ENCODE measurements at regions of chr7 and their contacts with region 1.

Region 1: GRCh38 chr7:28921822-28922221 is 36.3 kb downstream of the TRIL start:
- DNase-seq: peak; percentile 68
- ATAC-seq: peak; percentile 96
- H3K4me3 ChIP-seq: no peak overlapping the region
- H3K27ac ChIP-seq: no peak overlapping the region
- H3K4me1 ChIP-seq: peaks cover 1% of the 10 kb centered on the region; the same call in 1 of the 2 replicates
- H3K27me3 ChIP-seq: peaks cover 12% of the 10 kb centered on the region
- CTCF ChIP-seq: peak; percentile 82
- POLR2A ChIP-seq: no peak
- RAD21 ChIP-seq: peak; percentile 63

Region 2: DNA sequence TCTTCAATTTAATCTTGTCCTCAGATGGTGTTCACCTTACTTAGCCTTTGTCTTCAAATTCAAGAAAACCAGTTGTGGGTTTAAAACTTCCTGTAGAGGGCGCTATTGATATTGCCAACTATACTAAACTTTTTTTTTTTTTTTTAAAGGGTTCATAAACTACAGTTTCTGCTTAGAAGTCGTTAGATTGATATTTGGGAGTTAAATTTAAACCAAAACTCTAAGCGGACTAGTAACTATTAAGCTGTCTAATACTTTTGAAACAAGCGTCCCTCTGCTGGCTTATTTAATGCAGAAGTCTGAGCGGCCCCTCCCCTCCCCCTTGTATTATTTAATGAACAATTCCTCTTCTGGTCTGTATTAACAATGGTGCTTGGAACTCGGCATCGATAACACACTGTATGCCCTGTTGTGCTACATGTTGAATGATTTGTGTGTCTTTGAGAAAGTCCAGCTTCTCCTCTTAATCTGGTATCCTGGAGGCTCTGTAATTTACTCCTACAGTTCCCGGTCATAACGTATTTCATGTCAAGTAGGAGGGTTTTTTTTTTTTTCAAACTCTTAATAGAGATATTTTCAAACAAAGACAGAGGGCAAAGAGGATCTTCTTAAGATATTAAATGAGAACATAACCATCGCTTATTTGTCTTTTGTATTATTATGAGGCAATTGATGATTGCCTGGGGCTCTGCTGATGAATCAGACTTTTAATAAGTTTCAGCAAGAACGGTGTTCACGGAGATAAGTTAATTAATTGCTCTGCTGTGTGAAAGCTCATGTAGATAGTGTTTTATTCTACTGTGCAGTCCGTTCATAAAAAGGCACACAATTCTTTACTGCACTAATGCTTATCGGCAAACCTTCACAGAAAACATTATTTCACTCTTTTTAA is 532.1 kb before region 1 on chr7:
- CTCF ChIA-PET with region 1: no interaction called
- POLR2A ChIA-PET with region 1: no interaction called
- dilution Hi-C with region 1: no loop called
- in situ Hi-C with region 1: no loop called
- intact Hi-C with region 1: loop called (anchors 2 kb)
- DNase-seq: peak; percentile 79
- ATAC-seq: peak; percentile 75
- H3K4me3 ChIP-seq: peak overlapping the region; percentile 34; the same call in 1 of the 2 replicates
- H3K27ac ChIP-seq: no peak overlapping the region
- H3K4me1 ChIP-seq: 0 out of 2 replicates have a peak, but pooled peaks cover 2% of the 10 kb centered on the region
- H3K27me3 ChIP-seq: peaks cover 7% of the 10 kb centered on the region; the same call in 1 of the 2 replicates
- CTCF ChIP-seq: peak; percentile 80
- POLR2A ChIP-seq: no peak
- RAD21 ChIP-seq: peak; percentile 80

Region 3: GRCh38 chr7:28732071-28732869 is 189.6 kb before region 1 on chr7:
- CTCF ChIA-PET with region 1: no interaction called
- POLR2A ChIA-PET with region 1: no interaction called
- dilution Hi-C with region 1: no loop called
- in situ Hi-C with region 1: no loop called
- intact Hi-C with region 1: no loop called
- DNase-seq: peak; percentile 55
- ATAC-seq: peak; percentile 40
- H3K4me3 ChIP-seq: no peak overlapping the region
- H3K27ac ChIP-seq: no peak overlapping the region
- H3K4me1 ChIP-seq: peaks cover 6% of the 10 kb centered on the region
- H3K27me3 ChIP-seq: no peaks in the 10 kb centered on the region
- CTCF ChIP-seq: no peak
- POLR2A ChIP-seq: no peak
- RAD21 ChIP-seq: no peak

Region 4: GRCh38 chr7:28933846-28934320 is 12.1 kb after region 1 on chr7:
- CTCF ChIA-PET with region 1: interaction called, 13 read pairs
- POLR2A ChIA-PET with region 1: no interaction called
- dilution Hi-C with region 1: no loop called
- in situ Hi-C with region 1: no loop called
- intact Hi-C with region 1: no loop called
- DNase-seq: no peak
- ATAC-seq: no peak
- H3K4me3 ChIP-seq: no peak overlapping the region
- H3K27ac ChIP-seq: no peak overlapping the region
- H3K4me1 ChIP-seq: no peaks in the 10 kb centered on the region
- H3K27me3 ChIP-seq: peaks cover 26% of the 10 kb centered on the region
- CTCF ChIP-seq: no peak
- POLR2A ChIP-seq: no peak
- RAD21 ChIP-seq: no peak

Region 5: GRCh38 chr7:28976022-28976421 is 54.2 kb after region 1 on chr7:
- CTCF ChIA-PET with region 1: no interaction called
- POLR2A ChIA-PET with region 1: no interaction called
- dilution Hi-C with region 1: no loop called
- in situ Hi-C with region 1: no loop called
- intact Hi-C with region 1: no loop called
- DNase-seq: no peak
- ATAC-seq: no peak
- H3K4me3 ChIP-seq: no peak overlapping the region
- H3K27ac ChIP-seq: no peak overlapping the region
- H3K4me1 ChIP-seq: no peaks in the 10 kb centered on the region
- H3K27me3 ChIP-seq: peaks cover 1% of the 10 kb centered on the region; the same call in 1 of the 2 replicates
- CTCF ChIP-seq: no peak
- POLR2A ChIP-seq: no peak
- RAD21 ChIP-seq: no peak

Region 6: GRCh38 chr7:29035044-29035740 is 113.4 kb after region 1 on chr7:
- CTCF ChIA-PET with region 1: no interaction called
- POLR2A ChIA-PET with region 1: no interaction called
- dilution Hi-C with region 1: no loop called
- in situ Hi-C with region 1: no loop called
- intact Hi-C with region 1: no loop called
- DNase-seq: peak; percentile 58
- ATAC-seq: peak; percentile 24; the same call in 1 of the 2 replicates
- H3K4me3 ChIP-seq: no peak overlapping the region
- H3K27ac ChIP-seq: no peak overlapping the region
- H3K4me1 ChIP-seq: no peaks in the 10 kb centered on the region; the same call in 1 of the 2 replicates
- H3K27me3 ChIP-seq: no peaks in the 10 kb centered on the region
- CTCF ChIP-seq: no peak
- POLR2A ChIP-seq: no peak
- RAD21 ChIP-seq: no peak

Region 7: DNA sequence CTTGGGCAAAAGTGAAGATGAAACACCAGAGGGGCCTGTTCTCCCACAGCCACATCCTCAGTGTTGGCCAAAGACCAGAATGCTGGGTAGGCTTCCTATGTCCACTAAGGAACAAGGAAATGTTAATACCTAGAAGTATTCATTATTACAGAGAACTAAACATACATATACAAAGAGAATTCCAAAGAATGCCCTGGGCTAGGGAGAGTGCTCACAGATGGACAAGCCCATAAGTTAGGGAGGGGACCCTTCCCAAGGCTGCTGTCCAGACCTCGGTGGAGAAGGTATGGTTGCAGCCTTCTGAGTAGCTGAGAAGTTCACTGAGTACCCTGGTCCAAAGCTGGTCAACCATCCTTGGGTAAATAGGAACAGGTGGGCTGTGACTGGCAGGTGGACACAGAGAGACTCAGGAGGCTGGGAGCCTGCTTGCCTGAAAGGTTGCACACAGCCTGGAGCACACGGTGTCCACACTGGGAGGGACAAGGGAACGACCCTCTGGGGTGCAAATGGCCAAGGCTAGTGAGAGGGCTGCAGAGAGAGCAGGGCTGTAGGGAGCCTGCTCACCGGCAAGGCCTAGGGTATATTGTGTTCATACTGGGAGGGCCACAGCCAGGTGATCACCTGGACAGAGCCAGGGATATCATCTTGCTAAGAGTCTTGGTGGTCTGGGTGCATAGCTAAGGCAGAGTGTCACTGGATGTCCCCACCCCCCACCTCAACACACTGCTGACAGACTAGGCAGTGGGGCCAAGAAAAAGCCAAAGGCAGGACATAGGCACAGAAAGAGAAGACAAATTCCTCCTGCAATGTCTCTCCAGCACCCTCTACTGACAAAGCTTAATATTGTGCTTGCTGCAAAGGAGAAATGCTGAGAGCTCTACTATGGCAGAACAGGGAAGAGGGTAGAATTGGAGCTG is 184.2 kb after region 1 on chr7:
- CTCF ChIA-PET with region 1: interaction called, 36 read pairs
- POLR2A ChIA-PET with region 1: no interaction called
- dilution Hi-C with region 1: no loop called
- in situ Hi-C with region 1: loop called (anchors 5 kb)
- intact Hi-C with region 1: loop called (anchors 1 kb)
- DNase-seq: peak; percentile 60
- ATAC-seq: peak; percentile 97
- H3K4me3 ChIP-seq: no peak overlapping the region
- H3K27ac ChIP-seq: no peak overlapping the region
- H3K4me1 ChIP-seq: no peaks in the 10 kb centered on the region
- H3K27me3 ChIP-seq: peaks cover 7% of the 10 kb centered on the region
- CTCF ChIP-seq: peak; percentile 87
- POLR2A ChIP-seq: no peak
- RAD21 ChIP-seq: peak; percentile 79

Region 8: GRCh38 chr7:29408841-29409243 is 487.0 kb after region 1 on chr7:
- CTCF ChIA-PET with region 1: interaction called, 30 read pairs
- POLR2A ChIA-PET with region 1: no interaction called
- dilution Hi-C with region 1: no loop called
- in situ Hi-C with region 1: loop called (anchors 5 kb)
- intact Hi-C with region 1: loop called (anchors 1 kb)
- DNase-seq: peak; percentile 63
- ATAC-seq: peak; percentile 87
- H3K4me3 ChIP-seq: no peak overlapping the region
- H3K27ac ChIP-seq: no peak overlapping the region
- H3K4me1 ChIP-seq: no peaks in the 10 kb centered on the region
- H3K27me3 ChIP-seq: peaks cover 1% of the 10 kb centered on the region; the same call in 1 of the 2 replicates
- CTCF ChIP-seq: peak; percentile 80
- POLR2A ChIP-seq: no peak
- RAD21 ChIP-seq: peak; percentile 76

Region 9: GRCh38 chr7:29430279-29430949 is 508.6 kb after region 1 on chr7:
- CTCF ChIA-PET with region 1: no interaction called
- POLR2A ChIA-PET with region 1: interaction called, 12 read pairs
- dilution Hi-C with region 1: no loop called
- in situ Hi-C with region 1: no loop called
- intact Hi-C with region 1: no loop called
- DNase-seq: no peak
- ATAC-seq: no peak
- H3K4me3 ChIP-seq: no peak overlapping the region
- H3K27ac ChIP-seq: no peak overlapping the region
- H3K4me1 ChIP-seq: no peaks in the 10 kb centered on the region
- H3K27me3 ChIP-seq: no peaks in the 10 kb centered on the region
- CTCF ChIP-seq: no peak
- POLR2A ChIP-seq: no peak
- RAD21 ChIP-seq: no peak